Right ventricle myocardium inferior (tissue), 1 donor: ENCODE measurements at regions of chr1 and their contacts with region 1.

Region 1: DNA sequence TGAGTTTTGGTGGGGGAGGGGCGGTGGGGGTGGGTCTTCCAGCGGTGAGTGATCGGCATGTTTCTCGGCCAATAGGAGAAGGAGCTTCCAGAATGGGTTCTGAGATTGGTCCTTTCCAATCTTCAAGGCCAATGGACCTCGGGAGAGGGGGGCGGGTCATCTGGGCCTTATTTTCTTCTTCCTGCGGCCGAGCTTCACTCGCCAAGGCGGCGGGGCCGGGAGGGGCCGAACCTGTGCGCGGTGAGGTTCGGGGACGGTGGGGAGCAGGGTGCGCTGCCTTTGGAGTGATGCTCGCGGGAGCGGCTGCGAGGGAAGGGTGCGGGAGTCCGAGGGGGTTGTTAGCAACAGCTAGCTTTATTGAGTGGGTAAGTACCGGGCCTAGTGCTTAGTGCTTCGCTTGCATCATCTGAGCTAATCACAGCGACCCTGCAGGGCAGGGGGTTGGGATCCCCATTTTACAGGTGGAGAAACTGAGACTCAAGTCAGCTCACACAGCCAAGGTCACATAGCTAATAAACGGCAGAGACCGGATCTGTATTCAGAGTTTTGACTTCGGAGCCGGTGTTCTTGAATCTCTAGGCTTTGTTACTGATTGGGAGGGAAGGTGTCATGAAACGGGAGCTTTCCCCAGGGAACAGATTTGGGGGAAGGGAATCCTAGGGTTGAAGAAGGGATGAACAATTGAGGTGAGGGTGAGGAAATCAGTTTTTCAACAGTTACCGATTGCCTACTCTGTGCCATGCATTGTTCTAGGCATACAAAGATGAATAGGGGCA is 549 bp downstream of the KDM4A start:
- DNase-seq: peak; percentile 96
- ATAC-seq: peak; percentile 92

Region 2: GRCh38 chr1:43358746-43359693 is 291.5 kb before region 1 on chr1 and contains the start of gene CDC20:
- intact Hi-C with region 1: no loop called
- DNase-seq: peak; percentile 99
- ATAC-seq: peak; percentile 98
- total RNA-seq, gene CDC20: 1.6 TPM

Region 3: GRCh38 chr1:43529206-43529731 is 121.2 kb before region 1 on chr1:
- intact Hi-C with region 1: loop called (anchors 2 kb)
- DNase-seq: peak; percentile 92
- ATAC-seq: peak; percentile 68

Region 4: GRCh38 chr1:43552798-43553197 is 97.7 kb before region 1 on chr1:
- intact Hi-C with region 1: loop called (anchors 2 kb)
- DNase-seq: no peak
- ATAC-seq: peak; percentile 89

Region 5: DNA sequence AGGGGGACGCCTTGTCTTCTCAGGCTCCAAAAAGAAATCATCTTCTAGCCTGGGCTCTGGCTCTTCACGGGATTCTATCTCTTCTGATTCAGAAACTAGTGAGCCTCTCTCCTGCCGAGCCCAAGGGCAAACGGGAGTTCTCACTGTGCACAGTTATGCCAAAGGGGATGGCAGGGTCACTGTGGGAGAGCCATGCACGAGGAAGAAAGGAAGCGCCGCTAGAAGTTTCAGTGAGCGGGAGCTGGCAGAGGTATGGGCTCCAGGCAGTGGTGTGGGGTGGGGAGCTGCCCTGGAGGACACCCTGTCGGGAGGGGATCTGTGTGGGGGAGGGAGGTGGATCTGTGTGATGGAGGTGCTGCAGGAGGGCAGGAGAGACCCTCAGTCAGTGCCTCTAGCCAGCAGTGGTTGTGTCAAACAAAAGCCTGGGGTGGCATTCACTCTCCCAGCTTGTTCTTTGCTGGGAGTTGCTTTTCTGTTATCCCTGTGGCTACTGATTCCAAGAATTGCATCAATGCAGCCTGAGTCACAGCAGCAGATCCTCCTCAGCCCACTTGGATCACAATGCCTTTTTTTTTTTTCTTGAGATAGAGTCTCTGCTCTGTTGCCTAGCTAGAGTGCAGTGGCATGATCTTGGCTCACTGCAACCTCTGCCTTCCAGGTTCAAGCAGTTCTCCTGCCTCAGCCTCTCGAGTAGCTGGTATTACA is 21.3 kb after region 1 on chr1:
- intact Hi-C with region 1: no loop called
- DNase-seq: no peak
- ATAC-seq: peak; percentile 53

Region 6: DNA sequence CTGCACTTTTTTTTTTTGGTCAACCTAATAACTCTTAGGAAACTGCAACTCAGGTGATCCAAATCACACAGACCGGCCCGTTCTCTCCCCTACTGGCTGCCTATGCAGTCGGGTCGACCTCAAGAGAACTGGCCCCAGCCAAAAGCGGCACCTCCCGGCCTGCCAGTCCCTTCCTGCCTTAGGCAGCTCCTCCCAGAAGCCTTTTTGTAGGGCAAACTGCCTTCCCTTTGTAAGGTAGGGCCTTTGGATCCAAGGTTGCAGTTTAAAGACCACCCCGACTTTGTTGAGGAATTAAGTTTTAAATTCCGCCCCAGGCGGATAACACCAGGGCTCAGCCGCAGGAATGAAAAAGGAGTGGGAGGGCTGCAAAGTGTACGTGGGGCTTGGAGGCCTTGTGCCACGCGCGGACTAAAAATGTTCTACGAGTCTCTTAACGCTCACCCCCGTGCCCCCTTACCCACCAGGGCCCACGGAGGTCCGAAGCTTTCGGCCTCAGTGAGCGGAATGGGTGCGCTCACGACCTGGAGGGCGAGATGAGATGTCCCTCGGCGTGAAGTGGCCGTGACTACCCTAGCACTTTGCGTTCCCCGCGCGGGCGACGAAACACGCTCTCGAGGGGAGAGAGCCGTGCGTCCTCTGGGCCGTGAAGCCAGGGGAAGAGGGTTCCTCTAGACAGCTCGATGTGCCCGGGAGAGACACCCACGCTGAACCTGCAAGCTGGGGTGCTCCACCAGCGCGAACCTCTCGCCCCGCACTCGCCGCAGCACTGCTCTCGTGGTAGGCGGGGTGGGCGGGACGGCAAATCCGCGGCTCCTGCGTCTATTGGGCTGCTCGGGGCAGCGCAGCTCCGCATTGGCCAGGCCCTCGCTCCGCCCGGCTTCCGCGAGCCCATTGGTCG is 56.3 kb after region 1 on chr1:
- intact Hi-C with region 1: loop called (anchors 2 kb)
- DNase-seq: peak; percentile 96
- ATAC-seq: peak; percentile 98